ENCODE measurements at regions of chr2 and their contacts with region 1.

Region 1: GRCh38 chr2:140775411-140775810 is 1355.4 kb downstream of the LRP1B start:
- DNase-seq: no peak

Region 2: GRCh38 chr2:139241286-139241685 is 1534.1 kb before region 1 on chr2:
- intact Hi-C with region 1: no loop called
- DNase-seq: no peak

Region 3: GRCh38 chr2:139478206-139478914 is 1297.1 kb before region 1 on chr2:
- intact Hi-C with region 1: loop called in 1 of 2 experiments (anchors 5 kb)
- DNase-seq: no peak

Measured in posterior vena cava (tissue), 2 donors.